ENCODE measurements at regions of chr20 and their contacts with region 1.

Region 1: DNA sequence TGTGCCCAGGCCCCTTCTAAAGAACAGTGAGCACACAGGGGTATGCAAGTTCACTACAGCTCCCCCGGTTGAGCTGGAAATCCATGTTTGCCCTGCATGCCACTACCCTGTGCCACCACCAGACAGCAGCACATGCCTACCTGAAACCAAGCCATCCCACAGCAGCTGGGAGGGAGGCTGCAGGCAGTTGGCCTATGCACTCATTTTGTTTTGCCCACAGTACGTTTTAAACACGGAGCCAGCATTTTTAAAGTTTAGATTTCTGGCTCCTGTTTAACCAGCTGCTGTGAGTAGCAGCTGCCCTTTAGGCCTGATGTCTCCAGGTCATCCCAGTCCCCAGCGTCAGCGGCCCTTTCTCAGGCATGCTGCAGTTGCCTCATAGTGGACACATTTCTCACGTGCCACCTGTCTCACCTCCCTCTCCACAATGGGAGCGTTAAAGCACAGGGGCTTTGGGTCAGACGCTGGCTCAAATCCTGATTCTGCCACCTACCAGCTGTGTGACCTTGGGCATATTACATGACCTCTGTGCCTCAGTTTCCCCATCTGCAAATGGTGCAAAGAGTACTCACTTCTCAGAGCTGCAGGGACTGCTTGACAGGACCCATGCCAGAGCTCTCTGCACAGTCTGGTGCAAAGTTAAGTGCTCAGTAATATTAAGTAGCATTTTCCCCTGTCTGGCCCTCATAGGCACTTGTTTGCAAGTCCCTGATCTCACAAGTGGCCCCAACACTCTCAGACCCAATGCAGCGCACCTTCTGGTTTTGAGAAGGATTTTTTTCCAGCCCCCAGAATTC is 8.1 kb upstream of the UBE2V1 start:
- DNase-seq: peak; percentile 75
- ATAC-seq: peak; percentile 80
- H3K4me3 Mint-ChIP-seq: no peak overlapping the region
- H3K27ac Mint-ChIP-seq: no peak overlapping the region
- H3K4me1 Mint-ChIP-seq: peaks cover 8% of the 10 kb centered on the region
- H3K27me3 Mint-ChIP-seq: no peaks in the 10 kb centered on the region
- CTCF ChIP-seq: peak; percentile 70

Region 2: DNA sequence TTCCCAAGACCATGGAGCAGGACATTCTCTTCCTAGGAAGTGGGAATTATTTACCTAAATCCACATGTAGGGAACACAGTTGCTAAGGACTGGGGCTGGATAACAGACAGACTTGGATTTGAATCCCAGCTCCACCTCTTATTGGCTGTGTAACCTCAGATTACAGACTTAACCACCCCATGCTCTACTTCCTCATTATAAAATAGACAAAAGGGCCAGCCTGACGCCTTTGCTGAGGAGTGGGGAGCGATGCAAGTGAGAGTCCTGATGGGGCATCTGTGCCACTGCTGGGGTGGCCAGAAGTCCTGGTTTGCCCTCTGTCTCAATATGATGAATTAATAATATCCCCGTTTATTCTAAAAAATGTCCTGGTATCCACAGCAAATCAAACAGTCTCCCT is 252.6 kb before region 1 on chr20:
- CTCF ChIA-PET with region 1: no interaction called
- POLR2A ChIA-PET with region 1: no interaction called
- intact Hi-C with region 1: no loop called
- DNase-seq: no peak
- ATAC-seq: no peak
- H3K4me3 Mint-ChIP-seq: no peak overlapping the region
- H3K27ac Mint-ChIP-seq: no peak overlapping the region
- H3K4me1 Mint-ChIP-seq: no peaks in the 10 kb centered on the region
- H3K27me3 Mint-ChIP-seq: no peaks in the 10 kb centered on the region
- CTCF ChIP-seq: no peak

Region 3: DNA sequence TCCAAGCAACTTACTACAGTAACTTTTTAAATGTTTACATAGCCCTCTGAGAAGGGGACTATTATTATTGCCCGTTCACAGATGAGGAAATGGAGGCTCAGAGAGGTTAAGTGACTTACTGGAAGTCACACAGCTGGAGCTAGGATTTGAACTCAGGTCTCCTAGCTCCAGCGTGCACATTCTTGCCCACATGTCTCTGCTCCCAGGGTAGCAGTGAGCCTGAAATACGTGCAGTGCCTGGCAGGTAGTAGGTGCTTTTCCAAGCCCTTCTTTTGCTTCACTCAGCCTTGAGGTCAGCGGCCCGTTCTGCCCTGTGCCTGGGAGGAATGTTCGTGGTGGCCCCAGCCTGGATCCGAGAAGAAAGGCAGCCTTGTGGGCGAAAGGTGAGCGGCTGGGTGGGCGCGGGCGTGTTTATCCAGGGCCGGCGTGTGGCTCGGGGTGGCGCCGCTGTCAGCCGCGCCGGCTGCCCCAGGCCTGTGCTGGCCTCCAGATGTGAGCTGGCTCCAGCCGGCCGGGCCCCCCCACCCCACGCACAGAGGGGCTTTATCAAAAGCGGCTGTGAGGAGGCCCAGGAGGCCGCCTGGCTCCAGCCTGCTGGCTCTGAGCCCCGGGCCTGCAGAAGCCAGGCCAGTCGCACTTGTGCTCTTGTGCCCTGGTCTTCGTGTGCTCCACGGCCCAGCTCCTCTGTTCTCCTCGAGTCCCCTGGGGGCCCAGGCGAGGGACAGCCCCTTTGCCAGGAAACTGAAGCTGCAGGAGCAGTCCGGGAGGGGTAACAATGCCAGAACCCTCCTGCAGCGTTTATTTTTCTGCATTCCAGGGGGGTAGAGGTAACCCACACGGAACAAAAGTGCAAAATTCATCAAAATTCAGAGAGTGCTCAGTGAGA is 66.2 kb before region 1 on chr20:
- CTCF ChIA-PET with region 1: no interaction called
- POLR2A ChIA-PET with region 1: no interaction called
- intact Hi-C with region 1: no loop called
- DNase-seq: no peak
- ATAC-seq: no peak
- H3K4me3 Mint-ChIP-seq: no peak overlapping the region
- H3K27ac Mint-ChIP-seq: no peak overlapping the region
- H3K4me1 Mint-ChIP-seq: peaks cover 3% of the 10 kb centered on the region
- H3K27me3 Mint-ChIP-seq: peaks cover 3% of the 10 kb centered on the region
- CTCF ChIP-seq: no peak

Region 4: DNA sequence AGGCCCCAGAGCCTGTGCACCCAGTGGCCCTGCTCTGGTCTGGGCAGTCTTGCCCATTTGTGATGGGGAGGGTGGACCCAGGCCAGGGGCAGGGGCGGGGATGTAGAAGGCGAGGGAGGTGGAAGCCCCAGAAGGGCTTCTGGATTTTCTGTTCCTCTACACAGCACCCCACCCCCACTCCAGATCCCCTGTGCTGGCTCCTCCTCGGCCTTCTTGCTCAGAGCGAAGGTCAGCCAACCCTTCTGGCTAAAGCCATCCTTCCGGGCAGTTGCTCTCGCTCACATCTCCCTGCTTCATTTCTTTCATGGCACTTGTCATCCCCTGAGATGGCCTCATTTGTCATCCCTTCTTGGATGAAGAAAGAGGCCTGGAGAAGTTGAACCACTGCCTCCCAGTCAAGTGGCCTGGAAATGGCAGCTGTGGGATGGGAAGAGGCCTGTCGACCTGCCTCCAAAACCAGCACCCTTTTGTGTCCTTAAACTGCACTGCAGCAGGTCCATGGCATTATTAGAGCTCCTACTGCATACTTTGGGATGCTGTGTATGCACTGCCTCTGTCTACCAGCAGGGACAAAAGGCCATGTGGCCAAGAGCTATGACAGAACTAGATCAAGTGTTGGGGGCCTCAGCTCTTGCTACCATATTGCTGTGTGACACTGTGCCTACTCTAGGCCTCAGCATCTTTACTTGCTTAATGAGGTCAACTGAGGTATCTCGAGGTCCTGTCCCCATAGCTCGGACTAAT is 12.6 kb after region 1 on chr20:
- CTCF ChIA-PET with region 1: interaction called, 12 read pairs
- POLR2A ChIA-PET with region 1: interaction called, 3 read pairs
- intact Hi-C with region 1: no loop called
- DNase-seq: no peak
- ATAC-seq: peak; percentile 50
- H3K4me3 Mint-ChIP-seq: no peak overlapping the region
- H3K27ac Mint-ChIP-seq: no peak overlapping the region
- H3K4me1 Mint-ChIP-seq: peaks cover 12% of the 10 kb centered on the region
- H3K27me3 Mint-ChIP-seq: no peaks in the 10 kb centered on the region
- CTCF ChIP-seq: peak; percentile 19

Region 5: GRCh38 chr20:50146732-50147662 is 25.9 kb after region 1 on chr20:
- CTCF ChIA-PET with region 1: interaction called, 67 read pairs
- POLR2A ChIA-PET with region 1: interaction called, 5 read pairs
- intact Hi-C with region 1: no loop called
- DNase-seq: peak; percentile 87
- ATAC-seq: peak; percentile 99
- H3K4me3 Mint-ChIP-seq: peak overlapping the region; percentile 71
- H3K27ac Mint-ChIP-seq: peak overlapping the region; percentile 98
- H3K4me1 Mint-ChIP-seq: peaks cover 56% of the 10 kb centered on the region
- H3K27me3 Mint-ChIP-seq: no peaks in the 10 kb centered on the region
- CTCF ChIP-seq: no peak

Region 6: DNA sequence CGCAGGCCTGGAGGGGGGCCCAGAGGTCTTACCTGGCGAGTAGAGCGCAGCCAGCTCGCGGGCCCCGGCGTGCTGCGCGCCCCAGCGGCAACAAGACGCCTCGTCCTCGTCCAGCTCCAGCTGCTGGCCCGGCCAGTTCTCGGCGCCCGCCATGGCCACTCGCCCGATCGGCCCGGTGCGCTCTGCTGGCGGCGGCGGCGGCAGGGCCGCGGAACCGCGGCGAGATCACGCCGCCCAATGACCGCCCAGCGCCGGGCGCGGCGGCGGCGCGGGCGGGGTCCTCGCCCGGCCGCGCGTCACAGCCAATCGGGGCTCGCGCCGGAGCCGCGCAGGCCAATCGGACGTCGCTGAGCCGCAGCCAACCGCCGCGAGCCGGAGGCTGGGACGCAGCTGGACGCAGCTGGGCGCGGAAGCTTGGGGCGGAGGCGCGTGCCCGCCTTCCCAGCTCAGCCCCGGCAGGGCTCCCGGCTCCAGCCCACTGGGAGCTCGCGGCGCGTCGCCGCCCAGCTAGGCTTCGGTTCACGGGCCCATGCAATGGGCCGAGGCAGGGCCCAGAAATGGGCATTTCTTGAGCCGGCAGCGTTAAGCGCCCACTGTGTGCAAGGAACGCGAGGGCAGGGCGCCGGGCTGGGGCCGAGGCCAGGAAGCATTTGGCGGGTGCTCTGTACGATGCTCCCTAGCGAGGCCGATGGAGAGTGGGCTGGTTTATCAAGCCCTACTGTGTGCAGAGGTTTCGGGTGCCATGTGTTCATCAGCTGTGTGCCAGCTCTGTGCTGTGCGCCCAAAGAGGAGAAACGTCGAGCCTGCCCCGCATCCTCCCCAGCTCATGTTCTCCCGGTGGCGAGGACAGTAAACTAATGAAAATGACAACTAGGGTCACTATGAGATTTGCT is 32.6 kb after region 1 on chr20 and contains the start of gene PEDS1:
- CTCF ChIA-PET with region 1: interaction called, 67 read pairs
- POLR2A ChIA-PET with region 1: interaction called, 15 read pairs
- intact Hi-C with region 1: no loop called
- DNase-seq: peak; percentile 84
- ATAC-seq: peak; percentile 96
- H3K4me3 Mint-ChIP-seq: peak within 1 kb of the TSS; percentile 85
- H3K27ac Mint-ChIP-seq: peak within 1 kb of the TSS; percentile 84
- H3K4me1 Mint-ChIP-seq: peaks cover 35% of the 10 kb centered on the region
- H3K27me3 Mint-ChIP-seq: no peaks in the 10 kb centered on the region
- CTCF ChIP-seq: no peak
- total RNA-seq, gene PEDS1: 16.0 to 17.3 TPM